ENCODE measurements at regions of chr7 and their contacts with region 1.

Region 1: DNA sequence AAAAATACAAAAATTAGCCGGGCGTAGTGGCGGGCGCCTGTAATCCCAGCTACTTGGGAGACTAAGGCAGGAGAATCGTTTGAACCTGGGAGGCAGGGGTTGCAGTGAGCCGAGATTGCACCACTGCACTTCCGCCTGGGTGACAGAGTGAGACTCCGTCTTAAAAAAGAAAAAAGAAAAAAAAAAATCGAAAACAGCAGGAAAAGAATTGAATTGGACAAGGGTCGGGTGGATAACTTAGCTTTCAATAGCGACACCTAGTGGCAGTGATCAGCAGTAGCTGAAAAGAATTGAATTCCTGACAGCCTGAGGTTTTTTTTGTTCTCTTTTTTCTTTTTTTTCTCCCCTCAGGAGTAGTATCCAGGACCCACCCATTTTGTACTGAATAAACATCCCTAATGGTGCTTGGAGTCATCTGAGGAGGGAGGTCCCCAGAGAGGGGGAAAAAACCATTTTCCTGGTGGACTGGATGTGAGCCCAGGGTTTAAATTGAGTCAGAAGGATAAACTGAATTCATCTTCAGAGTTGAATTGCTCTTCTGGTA is 55.1 kb downstream of the CYCS start:
- DNase-seq: peak; percentile 45
- H3K4me3 ChIP-seq: no peak overlapping the region
- H3K27ac ChIP-seq: no peak overlapping the region
- H3K4me1 ChIP-seq: no peaks in the 10 kb centered on the region
- H3K27me3 ChIP-seq: no peaks in the 10 kb centered on the region
- CTCF ChIP-seq: peak; percentile 77 to 84

Region 2: GRCh38 chr7:24570983-24571382 is 499.0 kb before region 1 on chr7:
- CTCF ChIA-PET with region 1: no interaction called
- dilution Hi-C with region 1: no loop called
- in situ Hi-C with region 1: no loop called
- intact Hi-C with region 1: no loop called
- DNase-seq: no peak
- H3K4me3 ChIP-seq: no peak overlapping the region
- H3K27ac ChIP-seq: no peak overlapping the region
- H3K4me1 ChIP-seq: peaks cover 14% of the 10 kb centered on the region
- H3K27me3 ChIP-seq: no peaks in the 10 kb centered on the region
- CTCF ChIP-seq: no peak

Region 3: GRCh38 chr7:24812310-24812945 is 257.5 kb before region 1 on chr7:
- CTCF ChIA-PET with region 1: interaction called, 10 read pairs
- dilution Hi-C with region 1: no loop called
- in situ Hi-C with region 1: no loop called
- intact Hi-C with region 1: loop called (anchors 1 kb)
- DNase-seq: peak; percentile 39
- H3K4me3 ChIP-seq: no peak overlapping the region
- H3K27ac ChIP-seq: no peak overlapping the region
- H3K4me1 ChIP-seq: no peaks in the 10 kb centered on the region
- H3K27me3 ChIP-seq: no peaks in the 10 kb centered on the region
- CTCF ChIP-seq: peak; percentile 83 to 92

Region 4: GRCh38 chr7:24877790-24878311 is 192.1 kb before region 1 on chr7:
- CTCF ChIA-PET with region 1: no interaction called
- dilution Hi-C with region 1: no loop called
- in situ Hi-C with region 1: loop called in 1 of 2 experiments (anchors 25 kb)
- intact Hi-C with region 1: no loop called
- DNase-seq: no peak
- H3K4me3 ChIP-seq: no peak overlapping the region
- H3K27ac ChIP-seq: no peak overlapping the region
- H3K4me1 ChIP-seq: peaks cover 4% of the 10 kb centered on the region
- H3K27me3 ChIP-seq: no peaks in the 10 kb centered on the region
- CTCF ChIP-seq: no peak

Region 5: DNA sequence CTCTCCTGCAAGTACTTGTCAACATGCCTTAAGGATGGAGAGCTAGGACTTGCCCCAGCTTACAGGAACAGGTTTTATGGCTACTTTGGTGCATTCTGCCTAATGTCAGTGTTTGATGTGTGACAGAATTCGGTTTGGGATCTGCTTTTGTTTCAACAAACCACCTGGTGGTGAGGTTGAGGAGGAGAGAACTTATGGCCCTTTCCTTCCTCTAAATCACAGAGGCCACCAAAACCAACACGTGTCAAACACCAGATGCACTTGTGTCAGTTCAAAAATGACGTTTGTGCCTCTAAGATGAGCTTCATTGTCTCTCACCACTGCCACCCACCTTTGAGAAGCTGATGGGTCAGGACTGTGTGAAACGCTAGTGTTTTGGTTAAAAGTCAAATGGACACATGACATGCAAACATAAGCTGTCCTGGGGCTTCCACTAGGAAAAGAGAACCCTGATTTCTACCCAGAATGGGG is 173.9 kb before region 1 on chr7:
- CTCF ChIA-PET with region 1: no interaction called
- dilution Hi-C with region 1: no loop called
- in situ Hi-C with region 1: loop called in 1 of 2 experiments (anchors 25 kb)
- intact Hi-C with region 1: loop called (anchors 1 kb)
- DNase-seq: no peak
- H3K4me3 ChIP-seq: no peak overlapping the region
- H3K27ac ChIP-seq: no peak overlapping the region
- H3K4me1 ChIP-seq: peaks cover 20% of the 10 kb centered on the region
- H3K27me3 ChIP-seq: no peaks in the 10 kb centered on the region
- CTCF ChIP-seq: no peak

Region 6: GRCh38 chr7:24948739-24949138 is 121.2 kb before region 1 on chr7:
- CTCF ChIA-PET with region 1: interaction called, 12 read pairs
- dilution Hi-C with region 1: no loop called
- in situ Hi-C with region 1: no loop called
- intact Hi-C with region 1: no loop called
- DNase-seq: no peak
- H3K4me3 ChIP-seq: no peak overlapping the region
- H3K27ac ChIP-seq: no peak overlapping the region
- H3K4me1 ChIP-seq: peaks cover 13% of the 10 kb centered on the region
- H3K27me3 ChIP-seq: no peaks in the 10 kb centered on the region
- CTCF ChIP-seq: no peak

Measured in mammary epithelial cell (primary cell).